Activated CD8-positive, alpha-beta T cell treated with anti-CD3 and anti-CD28 coated beads, Interleukin-2, amount 10 ng/mL, durations not matched to agents 7 days and 5 days (primary cell): ENCODE measurements at regions of chr3 and their contacts with region 1.

Region 1: GRCh38 chr3:49539659-49540560 is 14.4 kb upstream of the BSN start:
- DNase-seq: peak; percentile 93
- ATAC-seq: peak; percentile 92
- H3K4me3 Mint-ChIP-seq: peak overlapping the region; percentile 73
- H3K27ac Mint-ChIP-seq: no peak overlapping the region
- H3K4me1 Mint-ChIP-seq: peaks cover 10% of the 10 kb centered on the region
- H3K27me3 Mint-ChIP-seq: peaks cover 14% of the 10 kb centered on the region

Region 2: DNA sequence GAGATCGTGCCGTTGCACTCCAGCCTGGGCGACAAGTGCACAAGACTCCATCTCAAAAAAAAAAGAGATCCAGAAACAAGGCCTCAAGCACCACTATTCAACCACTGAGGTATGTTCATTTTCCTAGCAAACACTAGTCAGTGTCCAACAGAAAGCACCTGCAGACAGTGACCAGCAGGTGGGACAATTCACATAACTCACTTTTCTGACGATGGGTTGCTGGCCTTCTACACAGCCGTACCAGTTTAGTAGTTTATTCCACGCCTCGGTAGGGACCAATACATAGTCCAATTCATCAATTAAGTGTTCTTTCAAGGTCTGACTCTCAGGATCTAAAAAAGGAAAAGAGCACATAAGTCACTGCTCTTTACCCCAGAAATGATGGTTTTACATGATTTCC is 212.4 kb before region 1 on chr3:
- CTCF ChIA-PET with region 1: no interaction called
- POLR2A ChIA-PET with region 1: no interaction called
- DNase-seq: no peak
- ATAC-seq: no peak
- H3K4me3 Mint-ChIP-seq: no peak overlapping the region
- H3K27ac Mint-ChIP-seq: no peak overlapping the region
- H3K4me1 Mint-ChIP-seq: no peaks in the 10 kb centered on the region
- H3K27me3 Mint-ChIP-seq: no peaks in the 10 kb centered on the region

Region 3: GRCh38 chr3:49387721-49388120 is 152.2 kb before region 1 on chr3:
- CTCF ChIA-PET with region 1: no interaction called
- POLR2A ChIA-PET with region 1: no interaction called
- DNase-seq: no peak
- ATAC-seq: no peak
- H3K4me3 Mint-ChIP-seq: no peak overlapping the region
- H3K27ac Mint-ChIP-seq: peak overlapping the region; percentile 8
- H3K4me1 Mint-ChIP-seq: peaks cover 27% of the 10 kb centered on the region
- H3K27me3 Mint-ChIP-seq: no peaks in the 10 kb centered on the region

Region 4: GRCh38 chr3:49406571-49407566 is 133.0 kb before region 1 on chr3:
- CTCF ChIA-PET with region 1: no interaction called
- POLR2A ChIA-PET with region 1: no interaction called
- DNase-seq: no peak
- ATAC-seq: no peak
- H3K4me3 Mint-ChIP-seq: no peak overlapping the region
- H3K27ac Mint-ChIP-seq: peak overlapping the region; percentile 76
- H3K4me1 Mint-ChIP-seq: peaks cover 42% of the 10 kb centered on the region
- H3K27me3 Mint-ChIP-seq: no peaks in the 10 kb centered on the region

Region 5: GRCh38 chr3:49553692-49554632 is 14.1 kb after region 1 on chr3 and contains the start of gene BSN:
- CTCF ChIA-PET with region 1: interaction called, 40 read pairs
- POLR2A ChIA-PET with region 1: interaction called, 3 read pairs
- DNase-seq: peak; percentile 92
- ATAC-seq: peak; percentile 86
- H3K4me3 Mint-ChIP-seq: peak within 1 kb of the TSS; percentile 81
- H3K27ac Mint-ChIP-seq: peak within 1 kb of the TSS; percentile 68
- H3K4me1 Mint-ChIP-seq: peaks cover 25% of the 10 kb centered on the region
- H3K27me3 Mint-ChIP-seq: peaks cover 30% of the 10 kb centered on the region
- total RNA-seq, gene BSN: 0.05 to 0.34 TPM

Region 6: DNA sequence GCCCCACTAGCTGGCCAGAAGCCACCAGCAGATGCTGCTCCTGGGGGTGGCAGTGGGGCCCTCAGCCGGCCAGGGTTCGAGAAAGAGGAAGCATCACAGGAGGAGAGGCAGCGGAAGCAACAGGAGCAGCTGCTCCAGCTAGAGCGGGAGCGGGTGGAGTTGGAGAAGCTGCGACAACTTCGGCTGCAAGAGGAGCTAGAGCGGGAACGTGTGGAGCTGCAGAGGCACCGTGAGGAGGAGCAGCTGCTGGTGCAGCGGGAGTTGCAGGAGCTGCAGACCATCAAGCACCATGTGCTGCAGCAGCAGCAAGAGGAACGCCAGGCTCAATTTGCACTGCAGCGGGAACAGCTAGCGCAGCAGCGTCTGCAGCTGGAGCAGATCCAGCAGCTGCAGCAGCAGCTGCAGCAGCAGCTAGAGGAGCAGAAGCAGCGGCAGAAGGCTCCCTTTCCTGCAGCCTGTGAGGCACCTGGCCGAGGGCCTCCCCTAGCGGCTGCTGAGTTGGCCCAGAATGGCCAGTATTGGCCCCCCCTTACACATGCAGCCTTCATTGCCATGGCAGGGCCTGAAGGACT is 116.7 kb after region 1 on chr3:
- CTCF ChIA-PET with region 1: interaction called, 12 read pairs
- POLR2A ChIA-PET with region 1: no interaction called
- DNase-seq: no peak
- ATAC-seq: no peak
- H3K4me3 Mint-ChIP-seq: no peak overlapping the region
- H3K27ac Mint-ChIP-seq: no peak overlapping the region
- H3K4me1 Mint-ChIP-seq: no peaks in the 10 kb centered on the region
- H3K27me3 Mint-ChIP-seq: peaks cover 3% of the 10 kb centered on the region

Region 7: GRCh38 chr3:49703443-49703927 is 163.6 kb after region 1 on chr3:
- CTCF ChIA-PET with region 1: interaction called, 10 read pairs
- POLR2A ChIA-PET with region 1: no interaction called
- DNase-seq: peak; percentile 79
- ATAC-seq: peak; percentile 96
- H3K4me3 Mint-ChIP-seq: no peak overlapping the region
- H3K27ac Mint-ChIP-seq: no peak overlapping the region
- H3K4me1 Mint-ChIP-seq: no peaks in the 10 kb centered on the region
- H3K27me3 Mint-ChIP-seq: no peaks in the 10 kb centered on the region